ENCODE measurements at regions of chr9 and their contacts with region 1.

Region 1: GRCh38 chr9:131762356-131762932 is 22.6 kb upstream of the RAPGEF1 start:
- DNase-seq: peak; percentile 90
- ATAC-seq: peak; percentile 91

Region 2: GRCh38 chr9:132235946-132236661 is 473.7 kb after region 1 on chr9:
- intact Hi-C with region 1: loop called (anchors 5 kb)
- DNase-seq: peak; percentile 80
- ATAC-seq: no peak

Region 3: GRCh38 chr9:132249123-132249522 is 486.7 kb after region 1 on chr9:
- intact Hi-C with region 1: loop called (anchors 2 kb)
- DNase-seq: no peak
- ATAC-seq: peak; percentile 30

Region 4: DNA sequence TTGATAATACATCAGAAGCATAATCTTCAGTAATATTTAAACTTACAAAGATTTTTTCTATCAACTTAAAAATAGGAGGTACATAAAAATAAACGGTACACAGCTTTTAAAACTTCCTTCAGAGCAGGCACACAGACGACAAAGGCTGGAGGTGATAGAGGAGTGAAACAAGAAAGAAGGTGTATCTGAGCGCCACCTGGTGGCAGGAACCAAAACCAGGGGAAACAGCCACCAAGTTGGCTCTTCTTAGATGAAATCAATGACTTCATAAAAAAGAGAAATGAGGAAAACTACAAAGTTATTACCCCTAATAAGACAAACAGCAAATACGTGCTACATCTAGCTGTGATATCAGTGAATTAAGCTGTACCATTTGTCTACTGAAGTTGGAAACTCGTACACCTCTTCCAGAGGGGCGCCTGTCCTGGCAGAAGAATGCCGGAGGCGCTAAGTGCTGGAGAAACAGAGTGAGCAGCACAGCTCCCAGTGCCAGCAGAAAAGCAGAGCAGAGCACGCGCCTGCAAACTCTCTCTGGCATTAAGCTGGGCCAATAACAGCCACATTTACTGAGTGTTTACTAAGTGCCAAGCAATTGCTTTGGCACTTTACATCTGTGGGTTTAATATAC is 506.4 kb after region 1 on chr9:
- intact Hi-C with region 1: loop called (anchors 5 kb)
- DNase-seq: no peak
- ATAC-seq: peak; percentile 60

Measured in Right ventricle myocardium inferior (tissue), 1 donor.